CD8-positive, alpha-beta memory T cell (primary cell): ENCODE measurements at regions of chr14 and their contacts with region 1.

Region 1: GRCh38 chr14:24160850-24161804 is at the start of gene IRF9:
- DNase-seq: peak; percentile 93 to 97 (median 96)
- H3K4me3 ChIP-seq: peak within 1 kb of the TSS; percentile 99
- H3K4me3 Mint-ChIP-seq: peak within 1 kb of the TSS; percentile 89 to 100 (median 98)
- H3K27ac ChIP-seq: peak within 1 kb of the TSS; percentile 96
- H3K27ac Mint-ChIP-seq: peak within 1 kb of the TSS; percentile 84 to 100 (median 99)
- H3K4me1 ChIP-seq: peaks cover 41% of the 10 kb centered on the region
- H3K4me1 Mint-ChIP-seq: peaks cover 40 to 56% (median 49%) of the 10 kb centered on the region in 3 donors
- H3K27me3 ChIP-seq: no peaks in the 10 kb centered on the region
- H3K27me3 Mint-ChIP-seq: peaks cover 0 to 3% of the 10 kb centered on the region in 2 donors
- total RNA-seq, gene IRF9: 62.0 to 68.6 TPM

Region 2: DNA sequence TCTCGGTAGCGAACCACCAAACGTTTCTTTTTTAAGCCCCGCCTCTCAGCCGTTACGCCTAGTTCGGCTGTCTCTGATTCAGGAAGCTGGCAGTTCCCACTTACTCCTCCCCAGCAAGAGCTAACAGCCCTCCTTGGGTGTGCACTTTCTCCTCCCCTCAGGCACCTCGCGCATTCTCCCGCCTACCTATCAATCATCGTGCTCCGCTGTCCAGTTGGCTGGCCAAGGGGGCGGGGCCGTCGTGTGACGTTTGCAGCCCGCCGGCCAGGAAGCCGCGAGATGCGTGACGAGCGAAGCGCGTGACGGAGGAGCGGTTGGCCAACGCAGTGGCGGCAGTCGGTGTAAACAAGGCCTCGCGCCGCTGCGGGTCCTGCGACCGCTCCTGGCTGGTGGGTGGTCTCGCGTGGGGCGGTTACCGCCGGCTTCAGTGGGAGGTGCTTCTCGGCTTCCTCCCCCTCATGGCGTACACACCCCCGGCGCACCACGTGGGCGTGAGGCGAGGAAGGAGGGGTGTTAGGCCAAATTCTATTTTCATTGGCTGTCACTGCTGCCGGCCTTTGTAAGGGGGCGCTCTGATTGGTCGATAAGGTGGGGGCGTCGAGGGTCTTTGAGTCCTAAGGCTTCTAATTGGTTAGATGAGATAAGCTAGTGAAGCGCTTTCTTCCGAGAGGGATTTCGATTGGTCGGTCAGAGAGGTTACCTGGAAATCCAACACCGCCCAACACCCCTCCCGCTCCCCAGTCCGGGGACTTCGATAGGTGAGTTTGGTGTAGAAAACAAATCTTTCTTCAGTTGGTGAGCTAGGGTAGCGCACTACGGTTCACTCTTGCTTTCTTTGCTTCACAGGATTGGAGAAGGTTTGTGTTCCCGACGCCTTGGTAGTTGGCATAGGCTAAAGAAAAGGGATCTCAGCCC is 46.3 kb before region 1 on chr14 and contains the starts of genes DCAF11 and NRL:
- CTCF ChIA-PET with region 1: interaction called, 35 read pairs
- POLR2A ChIA-PET with region 1: interaction called, 23 read pairs
- DNase-seq: peak; percentile 97 to 100 (median 99)
- H3K4me3 ChIP-seq: peak within 1 kb of the TSS; percentile 99
- H3K4me3 Mint-ChIP-seq: peak within 1 kb of the TSS; percentile 96 to 100 (median 98)
- H3K27ac ChIP-seq: peak within 1 kb of the TSS; percentile 98
- H3K27ac Mint-ChIP-seq: peak within 1 kb of the TSS; percentile 98 to 100 (median 99)
- H3K4me1 ChIP-seq: peaks cover 28% of the 10 kb centered on the region
- H3K4me1 Mint-ChIP-seq: peaks cover 30 to 37% (median 36%) of the 10 kb centered on the region in 3 donors
- H3K27me3 ChIP-seq: no peaks in the 10 kb centered on the region
- H3K27me3 Mint-ChIP-seq: peaks cover 0 to 5% of the 10 kb centered on the region in 2 donors
- total RNA-seq, gene DCAF11: 69.0 to 72.4 TPM
- total RNA-seq, gene NRL: 1.5 to 1.6 TPM

Region 3: GRCh38 chr14:24141097-24141880 is 19.8 kb before region 1 on chr14 and contains the start of gene EMC9:
- CTCF ChIA-PET with region 1: interaction called, 50 read pairs
- POLR2A ChIA-PET with region 1: interaction called, 13 read pairs
- DNase-seq: peak; percentile 98 to 100 (median 99)
- H3K4me3 ChIP-seq: peak within 1 kb of the TSS; percentile 85
- H3K4me3 Mint-ChIP-seq: peak within 1 kb of the TSS; percentile 87 to 98 (median 91)
- H3K27ac ChIP-seq: peak within 1 kb of the TSS; percentile 68
- H3K27ac Mint-ChIP-seq: peak within 1 kb of the TSS; percentile 80 to 98 (median 90)
- H3K4me1 ChIP-seq: peaks cover 56% of the 10 kb centered on the region
- H3K4me1 Mint-ChIP-seq: peaks cover 65 to 86% (median 79%) of the 10 kb centered on the region in 3 donors
- H3K27me3 ChIP-seq: no peaks in the 10 kb centered on the region
- H3K27me3 Mint-ChIP-seq: no peaks in the 10 kb centered on the region
- total RNA-seq, gene EMC9: 28.1 to 30.2 TPM

Region 4: DNA sequence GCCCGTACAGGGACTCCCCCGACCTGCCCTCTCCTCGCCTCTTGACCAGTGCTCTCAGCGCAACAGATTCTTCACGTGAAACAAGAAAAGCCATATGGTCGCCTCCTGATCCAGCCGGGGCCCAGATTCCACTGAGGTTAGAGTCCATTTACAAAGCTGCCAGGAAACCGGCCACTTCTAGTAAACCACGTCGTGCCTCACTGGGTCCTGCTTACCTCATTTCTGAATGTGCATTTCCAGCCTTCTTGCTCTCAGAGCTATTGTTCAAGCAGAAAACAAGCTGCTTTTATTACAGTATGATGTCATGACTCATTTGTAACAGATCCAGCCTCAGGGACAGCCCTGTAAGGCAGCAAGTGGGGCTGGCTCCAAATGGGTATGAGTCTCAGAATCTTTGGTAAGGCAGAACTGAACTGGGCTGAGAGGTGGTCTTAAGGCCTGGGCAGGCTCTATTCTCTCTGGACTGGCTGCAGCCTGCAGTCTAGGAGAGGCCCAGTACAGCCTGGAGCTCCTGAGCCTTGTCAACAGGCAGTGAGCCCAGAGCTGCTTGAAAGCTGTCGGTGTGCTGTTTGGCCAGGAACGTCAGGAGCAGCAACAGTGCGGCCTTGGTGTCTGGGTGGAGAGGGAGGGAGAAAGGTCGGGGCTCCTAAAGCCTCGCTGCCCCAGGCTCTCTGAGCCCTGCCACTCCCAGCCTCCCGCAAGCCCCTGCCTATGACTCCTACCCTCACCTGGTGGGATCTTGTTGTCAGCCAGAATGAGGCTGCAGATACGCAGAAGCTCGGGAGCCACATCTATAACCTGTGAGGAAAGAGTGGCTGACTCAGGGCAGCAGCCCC is 19.1 kb after region 1 on chr14:
- CTCF ChIA-PET with region 1: interaction called, 36 read pairs
- POLR2A ChIA-PET with region 1: no interaction called
- DNase-seq: no peak
- H3K4me3 ChIP-seq: no peak overlapping the region
- H3K4me3 Mint-ChIP-seq: no peak overlapping the region
- H3K27ac ChIP-seq: no peak overlapping the region
- H3K27ac Mint-ChIP-seq: peak overlapping the region in 5 of 8 donors; percentile 23 to 86 (median 38)
- H3K4me1 ChIP-seq: no peaks in the 10 kb centered on the region
- H3K4me1 Mint-ChIP-seq: peaks cover 2 to 7% (median 6%) of the 10 kb centered on the region in 3 donors
- H3K27me3 ChIP-seq: no peaks in the 10 kb centered on the region
- H3K27me3 Mint-ChIP-seq: no peaks in the 10 kb centered on the region

Region 5: GRCh38 chr14:24215495-24216344 is 54.6 kb after region 1 on chr14 and contains the start of gene MDP1:
- CTCF ChIA-PET with region 1: interaction called, 27 read pairs
- POLR2A ChIA-PET with region 1: interaction called, 6 read pairs
- DNase-seq: peak; percentile 76 to 92 (median 85)
- H3K4me3 ChIP-seq: peak within 1 kb of the TSS; percentile 94
- H3K4me3 Mint-ChIP-seq: peak within 1 kb of the TSS; percentile 87 to 97 (median 95)
- H3K27ac ChIP-seq: peak within 1 kb of the TSS; percentile 97
- H3K27ac Mint-ChIP-seq: peak within 1 kb of the TSS; percentile 95 to 100 (median 98)
- H3K4me1 ChIP-seq: peaks cover 39% of the 10 kb centered on the region
- H3K4me1 Mint-ChIP-seq: peaks cover 38 to 54% (median 50%) of the 10 kb centered on the region in 3 donors
- H3K27me3 ChIP-seq: no peaks in the 10 kb centered on the region
- H3K27me3 Mint-ChIP-seq: no peaks in the 10 kb centered on the region
- total RNA-seq, gene MDP1: 15.5 to 16.2 TPM